Adrenal gland (tissue), 19 donors: ENCODE measurements at regions of chr7 and their contacts with region 1.

Region 1: DNA sequence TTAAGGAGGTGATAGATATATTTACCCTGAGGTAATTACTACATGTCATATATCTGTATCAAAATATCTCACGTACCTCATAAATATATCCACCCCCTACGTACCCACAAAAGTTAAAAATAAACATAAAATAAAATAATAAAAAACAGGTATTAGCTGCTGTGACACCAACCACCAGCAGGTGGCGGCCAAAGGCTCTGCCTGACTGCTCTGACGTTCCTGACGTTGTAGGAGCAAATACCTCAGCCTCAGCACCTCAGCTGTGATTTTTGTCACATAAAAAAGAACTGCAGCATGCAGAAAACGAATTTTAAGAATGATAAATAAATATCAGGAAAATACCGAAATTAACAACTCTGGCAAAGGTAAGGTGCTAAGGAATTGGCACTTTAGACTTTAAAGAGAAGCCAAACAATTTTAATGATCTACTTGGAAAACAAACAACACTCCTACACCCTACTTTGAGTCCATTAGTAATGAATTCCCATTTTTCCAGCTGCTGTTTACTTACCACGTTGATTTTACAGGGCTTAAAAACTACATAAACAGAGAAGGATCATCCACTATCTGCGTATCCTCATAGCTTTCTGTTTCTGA is 125.4 kb upstream of the TARP start:
- DNase-seq: peak; percentile 22 to 75 (median 59)
- H3K4me3 ChIP-seq: no peak overlapping the region
- H3K27ac ChIP-seq: no peak overlapping the region
- H3K4me1 ChIP-seq: no peaks in the 10 kb centered on the region
- H3K27me3 ChIP-seq: no peaks in the 10 kb centered on the region
- CTCF ChIP-seq: peak; percentile 47 to 93 (median 78)
- POLR2A ChIP-seq: no peak

Region 2: GRCh38 chr7:38127216-38128207 is 271.3 kb before region 1 on chr7:
- intact Hi-C with region 1: no loop called
- DNase-seq: no peak
- H3K4me3 ChIP-seq: no peak overlapping the region
- H3K27ac ChIP-seq: no peak overlapping the region
- H3K4me1 ChIP-seq: no peaks in the 10 kb centered on the region
- H3K27me3 ChIP-seq: no peaks in the 10 kb centered on the region
- CTCF ChIP-seq: no peak
- POLR2A ChIP-seq: no peak

Region 3: DNA sequence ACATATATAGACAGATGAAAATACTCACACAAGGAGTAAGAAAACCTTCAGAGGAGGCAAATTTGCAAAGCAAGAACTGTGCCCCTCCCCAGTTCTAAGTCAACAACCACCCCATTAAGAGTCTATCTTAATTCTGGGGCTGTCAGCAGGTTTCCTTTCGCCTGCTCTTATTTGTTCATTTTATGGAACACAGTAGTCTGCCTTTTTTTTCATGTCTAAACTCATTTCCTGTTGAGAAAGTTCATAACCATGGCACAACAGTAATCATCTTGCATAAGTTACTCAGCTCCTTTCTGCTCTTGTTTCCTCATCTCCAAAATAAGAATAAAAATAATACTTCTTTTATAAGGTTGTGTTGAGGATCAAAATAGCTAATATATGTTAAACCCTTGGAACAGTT is 258.1 kb after region 1 on chr7:
- intact Hi-C with region 1: loop called in 1 of 2 experiments (anchors 5 kb)
- DNase-seq: no peak
- H3K4me3 ChIP-seq: no peak overlapping the region
- H3K27ac ChIP-seq: no peak overlapping the region
- H3K4me1 ChIP-seq: no peaks in the 10 kb centered on the region
- H3K27me3 ChIP-seq: no peaks in the 10 kb centered on the region
- CTCF ChIP-seq: no peak
- POLR2A ChIP-seq: no peak